ENCODE measurements at regions of chr1 and their contacts with region 1.

Region 1: GRCh38 chr1:91559849-91560565 is 59.4 kb downstream of the CDC7 start:
- DNase-seq: no peak
- H3K4me3 Mint-ChIP-seq: peak overlapping the region; percentile 29
- H3K27ac Mint-ChIP-seq: peak overlapping the region; percentile 82
- H3K4me1 Mint-ChIP-seq: peaks cover 74% of the 10 kb centered on the region
- H3K27me3 Mint-ChIP-seq: no peaks in the 10 kb centered on the region

Region 2: GRCh38 chr1:91548376-91549040 is 11.5 kb before region 1 on chr1:
- CTCF ChIA-PET with region 1: interaction called, 3 read pairs
- POLR2A ChIA-PET with region 1: interaction called, 20 read pairs
- DNase-seq: peak; percentile 54
- H3K4me3 Mint-ChIP-seq: peak overlapping the region; percentile 67
- H3K27ac Mint-ChIP-seq: peak overlapping the region; percentile 100
- H3K4me1 Mint-ChIP-seq: peaks cover 80% of the 10 kb centered on the region
- H3K27me3 Mint-ChIP-seq: peaks cover 3% of the 10 kb centered on the region

Measured in activated CD4-positive, alpha-beta memory T cell treated with anti-CD3 and anti-CD28 coated beads, Interleukin-2, amount 10 ng/mL, durations not matched to agents 7 days and 5 days (primary cell).